MCF 10A (cell line): ENCODE measurements at regions of chrX and their contacts with region 1.

Region 1: DNA sequence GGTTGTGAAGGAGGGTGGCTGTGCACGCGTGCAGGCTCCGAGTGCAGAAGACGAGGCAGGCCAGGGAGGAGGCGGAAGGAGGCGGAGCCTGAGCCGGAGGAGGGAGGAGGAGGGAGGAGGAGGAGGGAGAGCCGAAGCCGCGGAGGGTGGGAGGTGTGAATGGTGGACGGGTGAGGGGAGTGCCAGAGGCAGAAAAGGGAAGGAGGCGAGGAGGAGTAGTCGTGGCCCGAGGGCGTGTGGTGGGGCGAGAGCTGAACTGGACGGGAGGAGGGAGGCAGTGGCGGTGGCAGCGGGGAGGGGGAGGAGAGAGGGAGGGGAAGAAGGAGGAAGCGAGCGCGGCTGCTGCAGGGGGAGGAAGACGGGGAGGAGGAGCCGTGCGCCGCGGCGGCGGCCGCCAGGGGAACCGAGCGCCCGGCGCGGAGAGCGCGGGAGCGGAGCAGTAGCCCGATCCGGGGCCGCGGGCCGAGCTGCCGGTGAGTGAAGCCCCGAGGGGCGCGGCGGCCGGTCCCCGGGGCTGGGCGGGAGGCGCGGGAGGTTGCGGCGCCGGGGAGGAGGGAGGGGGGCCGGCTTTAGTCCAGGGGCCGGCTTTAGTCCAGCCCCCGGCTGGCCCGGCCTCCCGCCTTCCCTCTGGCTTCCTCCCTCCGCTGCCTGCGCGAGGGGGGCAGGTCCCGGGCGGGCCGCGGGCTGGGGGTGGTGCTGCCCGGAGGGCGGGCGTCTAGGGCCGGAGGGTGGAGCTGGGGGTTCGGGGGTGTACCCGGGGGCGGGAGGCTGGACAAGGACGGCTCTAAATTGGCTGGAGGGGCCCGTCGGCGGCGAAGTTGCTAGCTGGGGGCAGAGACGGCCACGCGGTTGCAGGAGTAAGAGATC is at the start of gene TMEM164:
- DNase-seq: peak; percentile 70
- H3K4me3 Mint-ChIP-seq: peak within 1 kb of the TSS; percentile 84
- H3K27ac Mint-ChIP-seq: peak within 1 kb of the TSS; percentile 80
- H3K4me1 Mint-ChIP-seq: peaks cover 27% of the 10 kb centered on the region
- H3K27me3 Mint-ChIP-seq: peaks cover 75% of the 10 kb centered on the region
- CTCF ChIP-seq: no peak
- total RNA-seq, gene TMEM164: 39.2 and 39.4 TPM in 2 replicates

Region 2: DNA sequence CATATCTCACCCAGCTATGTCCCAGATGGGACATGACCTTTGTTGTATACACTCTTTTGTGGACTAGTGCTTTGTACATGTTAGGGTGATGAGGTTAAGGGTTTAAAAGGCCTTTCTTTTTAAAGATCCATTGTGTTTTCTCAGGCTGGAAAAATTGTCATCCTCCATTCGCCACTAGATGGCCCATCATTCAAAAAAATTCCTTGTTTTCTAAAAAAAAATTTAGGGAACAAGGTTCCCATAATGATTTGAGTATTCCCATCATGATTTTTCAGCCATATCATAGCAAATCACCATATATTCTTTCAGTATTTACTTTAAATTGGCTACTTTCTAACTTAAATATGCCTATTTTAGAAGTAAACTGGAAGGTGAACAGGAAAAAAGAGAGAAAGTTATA is 91.5 kb before region 1 on chrX:
- CTCF ChIA-PET with region 1: interaction called, 6 read pairs
- POLR2A ChIA-PET with region 1: no interaction called
- intact Hi-C with region 1: loop called (anchors 1 kb)
- DNase-seq: peak; percentile 20
- H3K4me3 Mint-ChIP-seq: no peak overlapping the region
- H3K27ac Mint-ChIP-seq: no peak overlapping the region
- H3K4me1 Mint-ChIP-seq: no peaks in the 10 kb centered on the region
- H3K27me3 Mint-ChIP-seq: peaks cover 50% of the 10 kb centered on the region
- CTCF ChIP-seq: peak; percentile 45

Region 3: GRCh38 chrX:109952984-109953905 is 49.3 kb before region 1 on chrX:
- CTCF ChIA-PET with region 1: no interaction called
- POLR2A ChIA-PET with region 1: interaction called, 16 read pairs
- intact Hi-C with region 1: no loop called
- DNase-seq: no peak
- H3K4me3 Mint-ChIP-seq: no peak overlapping the region
- H3K27ac Mint-ChIP-seq: no peak overlapping the region
- H3K4me1 Mint-ChIP-seq: peaks cover 17% of the 10 kb centered on the region
- H3K27me3 Mint-ChIP-seq: peaks cover 64% of the 10 kb centered on the region
- CTCF ChIP-seq: no peak

Region 4: GRCh38 chrX:110026099-110026844 is 23.7 kb after region 1 on chrX:
- CTCF ChIA-PET with region 1: interaction called, 4 read pairs
- POLR2A ChIA-PET with region 1: interaction called, 20 read pairs
- intact Hi-C with region 1: no loop called
- DNase-seq: peak; percentile 75
- H3K4me3 Mint-ChIP-seq: peak overlapping the region; percentile 1
- H3K27ac Mint-ChIP-seq: peak overlapping the region; percentile 81
- H3K4me1 Mint-ChIP-seq: peaks cover 9% of the 10 kb centered on the region
- H3K27me3 Mint-ChIP-seq: peaks cover 24% of the 10 kb centered on the region
- CTCF ChIP-seq: no peak

Region 5: GRCh38 chrX:110103344-110103743 is 100.8 kb after region 1 on chrX:
- CTCF ChIA-PET with region 1: no interaction called
- POLR2A ChIA-PET with region 1: no interaction called
- intact Hi-C with region 1: loop called (anchors 5 kb)
- DNase-seq: no peak
- H3K4me3 Mint-ChIP-seq: no peak overlapping the region
- H3K27ac Mint-ChIP-seq: no peak overlapping the region
- H3K4me1 Mint-ChIP-seq: peaks cover 12% of the 10 kb centered on the region
- H3K27me3 Mint-ChIP-seq: peaks cover 65% of the 10 kb centered on the region
- CTCF ChIP-seq: no peak